ENCODE measurements at regions of chr13 and their contacts with region 1.

Region 1: DNA sequence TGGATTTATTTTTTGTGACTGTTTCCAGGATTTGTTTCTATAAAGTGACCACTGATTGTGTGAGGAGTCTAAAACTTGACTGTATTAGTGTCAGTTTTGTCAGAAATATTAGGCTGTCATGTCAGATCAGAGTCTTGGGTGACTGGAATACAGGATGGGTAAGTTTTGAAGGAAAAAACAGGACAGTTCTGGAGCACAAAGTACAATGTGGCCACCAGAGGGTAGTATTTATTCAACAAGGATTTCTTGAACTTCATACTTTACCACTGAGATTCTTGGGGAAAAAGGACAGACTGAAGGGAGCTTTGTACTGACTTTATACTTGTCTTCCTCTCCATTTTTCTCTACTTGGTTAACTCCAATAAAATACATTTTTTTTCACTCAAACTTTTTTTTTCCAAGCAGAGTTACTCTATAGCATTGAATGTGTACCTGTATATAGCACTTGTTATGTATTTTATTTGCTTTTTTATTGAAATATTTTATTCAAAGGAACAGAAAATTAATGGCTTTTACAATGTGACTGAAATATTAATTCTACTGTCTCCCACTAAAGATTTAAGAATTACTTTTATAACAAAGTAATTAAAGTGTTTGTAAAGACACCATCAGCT is 51.1 kb downstream of the LMO7 start:
- DNase-seq: no peak
- H3K4me3 ChIP-seq: no peak overlapping the region
- H3K27ac ChIP-seq: no peak overlapping the region
- H3K4me1 ChIP-seq: no peaks in the 10 kb centered on the region
- H3K27me3 ChIP-seq: no peaks in the 10 kb centered on the region
- CTCF ChIP-seq: peak; percentile 59 to 71 (median 66)
- POLR2A ChIP-seq: no peak

Region 2: DNA sequence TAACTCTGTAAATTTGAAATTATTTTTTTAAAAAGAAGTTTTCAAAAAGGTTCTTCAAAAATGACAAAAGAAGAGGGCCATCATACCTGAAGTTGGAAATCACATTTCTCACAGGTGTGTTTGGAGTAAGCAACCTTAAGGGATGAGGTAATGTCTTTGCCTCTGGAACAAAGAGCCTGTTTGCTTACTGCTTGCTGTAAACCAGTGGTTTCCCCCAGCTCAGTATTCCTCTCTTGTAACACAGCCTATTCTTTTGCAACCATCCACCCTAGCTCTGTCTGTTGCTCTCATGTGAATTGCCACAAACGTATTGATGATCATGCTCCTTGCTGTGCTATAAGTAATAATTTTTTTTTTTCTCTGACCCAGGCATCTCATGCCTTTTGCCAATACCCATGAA is 99.6 kb before region 1 on chr13:
- intact Hi-C with region 1: no loop called
- DNase-seq: no peak
- H3K4me3 ChIP-seq: no peak overlapping the region
- H3K27ac ChIP-seq: no peak overlapping the region
- H3K4me1 ChIP-seq: no peaks in the 10 kb centered on the region
- H3K27me3 ChIP-seq: no peaks in the 10 kb centered on the region
- CTCF ChIP-seq: no peak
- POLR2A ChIP-seq: no peak

Region 3: DNA sequence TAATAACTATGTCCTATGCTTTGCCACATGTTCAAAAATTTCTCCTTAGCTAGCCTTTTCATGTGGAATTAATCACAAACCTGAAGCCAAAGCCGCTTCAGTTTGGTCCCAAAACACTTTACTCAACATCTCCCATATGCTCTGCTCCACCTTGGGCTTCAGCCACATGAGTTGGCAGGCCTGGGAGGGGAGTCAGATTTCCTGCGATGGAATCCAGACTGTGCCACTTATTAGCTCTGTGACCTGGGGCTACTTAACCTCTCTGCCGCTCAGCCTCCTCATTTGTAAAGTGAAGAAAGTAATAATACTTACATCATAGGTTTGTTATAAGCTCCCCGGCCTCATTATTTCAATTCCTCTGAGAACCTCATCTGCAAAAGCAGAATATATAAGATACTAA is 220.9 kb after region 1 on chr13:
- intact Hi-C with region 1: no loop called
- DNase-seq: no peak
- H3K4me3 ChIP-seq: no peak overlapping the region
- H3K27ac ChIP-seq: peak overlapping the region in 1 of 2 donors; percentile 3
- H3K4me1 ChIP-seq: peaks cover 12% of the 10 kb centered on the region
- H3K27me3 ChIP-seq: no peaks in the 10 kb centered on the region
- CTCF ChIP-seq: no peak
- POLR2A ChIP-seq: no peak

Region 4: GRCh38 chr13:76894401-76895110 is 1207.3 kb after region 1 on chr13:
- intact Hi-C with region 1: loop called (anchors 10 kb)
- DNase-seq: no peak
- H3K4me3 ChIP-seq: no peak overlapping the region
- H3K27ac ChIP-seq: no peak overlapping the region
- H3K4me1 ChIP-seq: no peaks in the 10 kb centered on the region
- H3K27me3 ChIP-seq: no peaks in the 10 kb centered on the region
- CTCF ChIP-seq: no peak
- POLR2A ChIP-seq: no peak

Measured in testis (tissue), 5 donors.